ENCODE measurements at regions of chr1 and their contacts with region 1.

Region 1: DNA sequence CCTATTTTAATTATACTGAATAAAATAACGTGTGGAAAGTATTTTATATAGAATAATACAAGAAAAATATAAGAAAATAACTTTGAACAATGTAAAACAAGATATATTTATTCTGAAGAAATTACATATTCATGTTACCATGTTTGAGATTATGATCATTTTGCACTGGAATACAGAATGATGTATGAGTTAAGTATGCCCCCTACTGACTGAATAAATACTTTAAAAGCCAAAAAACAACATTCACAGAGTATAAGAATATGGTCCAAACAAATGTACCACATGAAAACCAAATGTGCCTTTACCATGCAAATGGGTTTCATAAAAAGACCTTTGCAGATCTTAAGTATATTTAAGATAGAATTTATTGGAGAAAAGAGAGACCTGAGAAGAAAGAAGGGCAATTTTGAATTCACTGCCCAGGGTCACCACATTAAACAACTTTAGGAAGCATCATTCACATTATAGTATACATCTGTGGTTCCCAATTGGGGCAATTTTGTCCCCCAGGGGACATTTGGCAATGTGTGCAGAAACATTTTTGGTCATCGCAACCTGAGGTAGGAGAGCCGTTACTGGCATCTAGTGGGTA is 136.6 kb upstream of the GFI1 start:
- DNase-seq: peak; percentile 10
- ATAC-seq: peak; percentile 38; the same call in 1 of the 3 replicates
- H3K4me3 ChIP-seq: no peak overlapping the region
- H3K27ac ChIP-seq: no peak overlapping the region
- H3K4me1 ChIP-seq: no peaks in the 10 kb centered on the region
- H3K27me3 ChIP-seq: no peaks in the 10 kb centered on the region
- CTCF ChIP-seq: peak; percentile 56
- EP300 ChIP-seq: no peak
- POLR2A ChIP-seq: no peak
- RAD21 ChIP-seq: peak; percentile 32; the same call in 1 of the 2 replicates

Region 2: GRCh38 chr1:91997607-91998195 is 625.6 kb before region 1 on chr1:
- CTCF ChIA-PET with region 1: no interaction called
- POLR2A ChIA-PET with region 1: no interaction called
- in situ Hi-C with region 1: loop called (anchors 25 kb)
- intact Hi-C with region 1: loop called (anchors 1 kb)
- DNase-seq: peak; percentile 35
- ATAC-seq: no peak
- H3K4me3 ChIP-seq: no peak overlapping the region
- H3K27ac ChIP-seq: no peak overlapping the region
- H3K4me1 ChIP-seq: no peaks in the 10 kb centered on the region
- H3K27me3 ChIP-seq: no peaks in the 10 kb centered on the region
- CTCF ChIP-seq: peak; percentile 62
- EP300 ChIP-seq: no peak
- POLR2A ChIP-seq: no peak
- RAD21 ChIP-seq: peak; percentile 26; the same call in 1 of the 2 replicates

Region 3: GRCh38 chr1:92016720-92017316 is 606.5 kb before region 1 on chr1:
- CTCF ChIA-PET with region 1: no interaction called
- POLR2A ChIA-PET with region 1: no interaction called
- in situ Hi-C with region 1: loop called (anchors 25 kb)
- intact Hi-C with region 1: no loop called
- DNase-seq: no peak
- ATAC-seq: no peak
- H3K4me3 ChIP-seq: no peak overlapping the region
- H3K27ac ChIP-seq: no peak overlapping the region
- H3K4me1 ChIP-seq: no peaks in the 10 kb centered on the region
- H3K27me3 ChIP-seq: no peaks in the 10 kb centered on the region; a peak in 1 of 5 replicates
- CTCF ChIP-seq: no peak
- EP300 ChIP-seq: no peak
- POLR2A ChIP-seq: no peak
- RAD21 ChIP-seq: no peak

Region 4: GRCh38 chr1:92310185-92310597 is 313.1 kb before region 1 on chr1:
- CTCF ChIA-PET with region 1: interaction called, 20 read pairs
- POLR2A ChIA-PET with region 1: no interaction called
- in situ Hi-C with region 1: loop called (anchors 5 kb)
- intact Hi-C with region 1: loop called (anchors 1 kb)
- DNase-seq: no peak
- ATAC-seq: peak; percentile 42; the same call in 2 of the 3 replicates
- H3K4me3 ChIP-seq: no peak overlapping the region
- H3K27ac ChIP-seq: no peak overlapping the region
- H3K4me1 ChIP-seq: no peaks in the 10 kb centered on the region
- H3K27me3 ChIP-seq: no peaks in the 10 kb centered on the region
- CTCF ChIP-seq: peak; percentile 50
- EP300 ChIP-seq: no peak
- POLR2A ChIP-seq: no peak
- RAD21 ChIP-seq: no peak; the same call in 1 of the 2 replicates

Region 5: DNA sequence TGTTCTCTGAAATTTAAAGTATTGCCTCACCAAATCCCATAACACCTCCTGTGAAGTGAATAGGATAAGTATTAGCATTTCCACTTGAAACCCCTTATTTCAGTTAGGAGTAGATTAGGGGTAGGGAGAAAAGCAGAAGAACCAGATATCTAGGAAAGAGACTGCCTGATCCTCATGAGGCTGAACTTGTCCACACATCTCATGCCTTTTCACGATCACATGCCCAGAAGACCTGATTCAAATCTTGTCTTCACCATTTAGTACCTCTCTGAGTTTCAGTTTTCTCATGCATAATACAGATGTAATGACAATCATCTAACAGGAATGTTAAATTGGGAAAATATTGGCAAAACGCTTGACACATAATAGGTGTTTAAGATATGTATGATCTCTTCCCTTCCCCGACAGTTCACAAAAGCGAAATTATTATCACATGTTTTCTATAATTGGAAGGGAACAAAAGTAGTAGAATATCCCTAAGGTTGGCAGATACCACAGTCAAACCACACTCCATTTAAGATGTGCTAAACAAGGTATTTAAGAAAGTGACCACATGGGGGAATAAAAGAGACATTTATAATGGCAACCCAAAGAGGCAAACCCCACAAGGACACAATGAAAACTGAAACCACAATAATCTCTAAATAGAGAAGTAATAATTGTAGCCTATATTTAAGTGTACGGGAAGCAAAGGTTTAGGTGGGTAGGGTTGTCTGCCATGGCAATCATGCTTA is 161.8 kb before region 1 on chr1:
- CTCF ChIA-PET with region 1: no interaction called
- POLR2A ChIA-PET with region 1: no interaction called
- in situ Hi-C with region 1: no loop called
- intact Hi-C with region 1: loop called (anchors 1 kb)
- DNase-seq: peak; percentile 15
- ATAC-seq: peak; percentile 69
- H3K4me3 ChIP-seq: no peak overlapping the region
- H3K27ac ChIP-seq: no peak overlapping the region
- H3K4me1 ChIP-seq: 0 out of 2 replicates have a peak, but pooled peaks cover 4% of the 10 kb centered on the region
- H3K27me3 ChIP-seq: no peaks in the 10 kb centered on the region; a peak in 1 of 5 replicates
- CTCF ChIP-seq: 0 out of 2 replicates have a peak, but pooled peaks have one; percentile 22
- EP300 ChIP-seq: no peak
- POLR2A ChIP-seq: no peak
- RAD21 ChIP-seq: no peak

Region 6: DNA sequence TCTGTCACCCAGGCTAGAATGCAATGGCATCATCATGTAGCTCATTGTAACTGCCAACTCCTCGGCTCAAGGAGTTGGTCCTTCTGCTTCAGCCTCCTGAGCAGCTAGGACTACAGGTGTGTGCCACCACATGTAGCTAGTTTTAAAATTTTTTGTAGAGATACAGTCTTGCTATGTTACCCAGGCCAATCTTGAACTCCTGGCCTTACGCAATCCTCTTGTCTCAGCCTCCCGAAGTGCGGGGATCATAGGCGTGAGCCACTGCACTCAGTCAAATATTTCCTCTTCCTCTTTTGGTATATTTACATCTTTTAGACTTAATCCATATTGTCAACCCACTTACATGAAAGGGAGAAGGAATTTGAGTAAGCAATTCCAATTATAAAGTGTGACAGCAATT is 40.5 kb after region 1 on chr1:
- CTCF ChIA-PET with region 1: no interaction called
- POLR2A ChIA-PET with region 1: no interaction called
- in situ Hi-C with region 1: no loop called
- intact Hi-C with region 1: no loop called
- DNase-seq: no peak
- ATAC-seq: no peak
- H3K4me3 ChIP-seq: no peak overlapping the region
- H3K27ac ChIP-seq: no peak overlapping the region
- H3K4me1 ChIP-seq: no peaks in the 10 kb centered on the region
- H3K27me3 ChIP-seq: no peaks in the 10 kb centered on the region
- CTCF ChIP-seq: no peak
- EP300 ChIP-seq: no peak
- POLR2A ChIP-seq: no peak
- RAD21 ChIP-seq: no peak